ENCODE measurements at regions of chr12 and their contacts with region 1.

Region 1: GRCh38 chr12:122225683-122226407 is at the start of gene DIABLO:
- DNase-seq: peak; percentile 100
- H3K4me3 Mint-ChIP-seq: peak within 1 kb of the TSS; percentile 85
- H3K27ac Mint-ChIP-seq: peak within 1 kb of the TSS; percentile 82
- H3K4me1 Mint-ChIP-seq: peaks cover 43% of the 10 kb centered on the region
- H3K27me3 Mint-ChIP-seq: no peaks in the 10 kb centered on the region
- total RNA-seq, gene DIABLO: 51.8 to 52.0 TPM

Region 2: DNA sequence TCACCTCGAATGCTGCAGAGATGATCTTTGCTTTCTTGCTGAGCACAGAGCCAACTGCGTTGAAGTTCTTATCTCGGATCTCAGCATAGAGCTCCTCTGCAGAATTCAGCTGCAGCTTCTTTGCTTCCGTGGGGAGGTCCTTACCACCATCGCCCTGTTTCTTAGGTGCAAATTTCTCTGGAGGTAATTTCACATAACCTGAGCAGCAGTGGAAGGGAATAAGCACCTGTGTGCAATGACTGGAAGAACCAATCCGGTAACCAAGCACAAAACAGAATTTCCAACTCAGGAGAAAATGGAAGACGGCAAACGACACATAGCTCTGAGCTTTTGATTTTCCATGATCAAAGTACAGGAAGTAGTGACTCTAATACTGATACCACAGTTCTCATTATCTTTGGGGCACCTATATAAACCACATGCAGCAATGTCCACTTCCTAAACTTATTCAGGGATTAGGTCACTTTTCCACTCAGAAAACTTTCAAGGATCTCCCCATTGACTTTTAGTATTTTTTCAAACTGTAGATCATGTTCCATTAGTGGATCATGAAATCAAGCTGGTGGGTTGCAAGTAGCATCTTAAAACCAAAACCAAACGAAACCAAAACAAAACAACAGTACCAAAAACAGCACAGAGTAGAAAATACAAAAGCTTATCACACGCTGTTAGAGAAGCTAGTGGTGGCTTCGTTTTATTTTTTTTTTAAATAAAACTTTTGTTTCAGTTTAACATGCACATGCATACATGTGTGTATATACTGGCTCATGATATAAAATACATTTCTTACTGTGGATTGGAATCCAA is 18.9 kb after region 1 on chr12:
- CTCF ChIA-PET with region 1: interaction called, 9 read pairs
- POLR2A ChIA-PET with region 1: interaction called, 12 read pairs
- intact Hi-C with region 1: loop called (anchors 1 kb)
- DNase-seq: peak; percentile 42
- H3K4me3 Mint-ChIP-seq: peak overlapping the region; percentile 74
- H3K27ac Mint-ChIP-seq: peak overlapping the region; percentile 83
- H3K4me1 Mint-ChIP-seq: peaks cover 25% of the 10 kb centered on the region
- H3K27me3 Mint-ChIP-seq: no peaks in the 10 kb centered on the region

Region 3: GRCh38 chr12:122293081-122293480 is 67.2 kb after region 1 on chr12:
- CTCF ChIA-PET with region 1: no interaction called
- POLR2A ChIA-PET with region 1: no interaction called
- intact Hi-C with region 1: no loop called
- DNase-seq: peak; percentile 22
- H3K4me3 Mint-ChIP-seq: no peak overlapping the region
- H3K27ac Mint-ChIP-seq: no peak overlapping the region
- H3K4me1 Mint-ChIP-seq: peaks cover 8% of the 10 kb centered on the region
- H3K27me3 Mint-ChIP-seq: no peaks in the 10 kb centered on the region

Measured in activated CD4-positive, alpha-beta memory T cell treated with anti-CD3 and anti-CD28 coated beads for 36 hours (primary cell).